ENCODE measurements at regions of chr10 and their contacts with region 1.

Region 1: DNA sequence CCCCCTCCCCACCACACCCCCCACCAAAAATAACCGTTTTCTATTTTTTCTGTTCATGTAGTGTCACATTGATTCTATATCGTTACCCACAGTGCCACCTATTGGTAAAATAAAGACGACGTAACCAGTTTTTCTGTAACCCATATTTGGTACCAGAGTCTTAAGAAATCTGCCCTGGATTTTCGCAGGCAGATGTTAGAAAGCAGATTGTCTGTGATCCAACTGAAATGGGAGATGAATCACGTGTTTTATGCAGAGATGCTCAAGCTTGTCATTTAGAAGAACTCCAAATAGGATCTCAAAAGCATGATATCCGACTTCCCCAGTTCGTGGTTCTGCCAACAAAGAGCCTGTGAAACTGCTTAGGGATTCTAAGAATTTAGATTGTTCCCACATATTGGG is 261.1 kb upstream of the CSTF2T start:
- DNase-seq: no peak
- H3K4me3 ChIP-seq: peak overlapping the region in 17 of 59 donors; percentile 2 to 49 (median 19)
- H3K27ac ChIP-seq: no peak overlapping the region
- H3K27me3 ChIP-seq: no peaks in the 10 kb centered on the region
- CTCF ChIP-seq: peak; percentile 27 to 79 (median 64)

Region 2: DNA sequence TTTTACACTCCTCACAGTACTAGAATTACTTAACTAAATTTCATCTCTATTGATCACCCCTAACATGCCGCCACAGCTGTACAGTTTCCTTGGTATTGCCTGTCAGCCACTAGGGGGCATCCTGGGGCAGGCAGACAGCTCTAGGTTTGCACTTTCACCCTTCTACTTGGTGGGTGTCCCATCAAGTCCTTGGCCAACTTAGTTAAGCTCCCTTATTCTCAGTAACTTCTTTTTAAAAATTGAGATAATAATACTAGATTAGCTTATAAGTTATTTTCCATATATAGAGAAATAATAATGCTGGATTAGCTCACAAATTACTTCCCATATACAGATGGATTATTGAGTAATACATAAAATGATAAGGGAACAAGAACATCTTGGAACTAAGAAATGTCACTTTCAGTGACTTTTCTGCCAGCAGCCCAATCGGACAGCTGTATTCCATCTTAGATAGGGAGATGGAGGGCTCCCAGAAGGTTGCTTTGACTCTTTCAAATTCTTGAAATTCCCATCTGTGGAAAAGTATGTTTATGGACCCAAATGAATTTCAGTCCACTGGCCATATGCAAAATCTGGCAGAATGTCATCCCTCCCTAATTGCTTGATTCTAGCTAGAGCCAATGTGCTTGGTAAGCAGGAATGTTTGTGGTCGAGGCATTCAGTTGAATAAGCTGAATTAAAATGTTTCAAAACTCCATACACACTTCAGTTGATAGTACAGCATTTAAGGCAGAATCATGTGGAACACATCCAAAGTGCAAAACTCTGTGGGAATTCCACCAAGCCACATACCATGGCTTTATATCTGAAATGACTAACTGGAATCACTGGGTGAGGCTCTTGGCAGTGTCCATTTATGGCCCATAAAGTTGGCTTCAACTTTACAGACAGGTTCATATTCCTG is 570.8 kb before region 1 on chr10:
- intact Hi-C with region 1: loop called (anchors 5 to 10 kb)
- DNase-seq: peak in 5 of 10 donors; percentile 7 to 58 (median 39)
- H3K4me3 ChIP-seq: no peak overlapping the region
- H3K27ac ChIP-seq: no peak overlapping the region
- H3K27me3 ChIP-seq: no peaks in the 10 kb centered on the region
- CTCF ChIP-seq: peak in 55 of 56 donors; percentile 34 to 88 (median 70)

Region 3: GRCh38 chr10:51699475-51700227 is 260.8 kb before region 1 on chr10 and contains the start of gene CSTF2T:
- intact Hi-C with region 1: loop called in 1 of 2 experiments (anchors 5 kb)
- DNase-seq: peak; percentile 78 to 91 (median 88)
- H3K4me3 ChIP-seq: peak within 1 kb of the TSS; percentile 65 to 99 (median 87)
- H3K27ac ChIP-seq: peak within 1 kb of the TSS; percentile 84 to 100 (median 99)
- H3K27me3 ChIP-seq: no peaks in the 10 kb centered on the region
- CTCF ChIP-seq: peak in 18 of 56 donors; percentile 7 to 52 (median 18)
- total RNA-seq, gene CSTF2T: 22.9 to 42.7 (median 30.2) TPM

Region 4: GRCh38 chr10:51879238-51879637 is 81.3 kb before region 1 on chr10:
- intact Hi-C with region 1: loop called in 1 of 2 experiments (anchors 5 kb)
- DNase-seq: no peak
- H3K4me3 ChIP-seq: no peak overlapping the region
- H3K27ac ChIP-seq: peak overlapping the region in 5 of 59 donors; percentile 2 to 43 (median 37)
- H3K27me3 ChIP-seq: no peaks in the 10 kb centered on the region
- CTCF ChIP-seq: no peak

Region 5: DNA sequence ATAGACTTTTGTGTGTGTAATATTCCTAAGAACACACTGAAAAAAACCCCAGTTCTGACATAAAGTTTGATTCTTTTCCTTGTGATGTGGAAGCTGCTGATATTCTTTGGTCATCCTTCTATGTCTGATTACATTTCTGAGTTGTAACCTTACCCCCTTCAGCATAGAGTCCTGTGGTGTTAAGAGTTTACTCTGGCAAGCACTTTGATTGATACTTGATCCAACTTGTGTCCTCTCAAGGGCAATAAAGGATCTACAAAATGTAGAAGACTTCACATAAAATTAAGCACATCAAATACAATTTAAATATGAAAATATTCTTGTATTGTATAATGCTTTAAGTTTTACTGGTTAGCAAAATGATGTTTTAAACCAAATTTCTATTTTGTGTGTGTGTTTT is 131.9 kb after region 1 on chr10:
- intact Hi-C with region 1: no loop called
- DNase-seq: no peak
- H3K4me3 ChIP-seq: no peak overlapping the region
- H3K27ac ChIP-seq: no peak overlapping the region
- H3K27me3 ChIP-seq: peaks cover 0 to 3% (median 0%) of the 10 kb centered on the region in 45 donors
- CTCF ChIP-seq: no peak

Measured in dorsolateral prefrontal cortex (tissue), 120 donors.